HCT116 (cell line): ENCODE measurements at regions of chr17 and their contacts with region 1.

Region 1: DNA sequence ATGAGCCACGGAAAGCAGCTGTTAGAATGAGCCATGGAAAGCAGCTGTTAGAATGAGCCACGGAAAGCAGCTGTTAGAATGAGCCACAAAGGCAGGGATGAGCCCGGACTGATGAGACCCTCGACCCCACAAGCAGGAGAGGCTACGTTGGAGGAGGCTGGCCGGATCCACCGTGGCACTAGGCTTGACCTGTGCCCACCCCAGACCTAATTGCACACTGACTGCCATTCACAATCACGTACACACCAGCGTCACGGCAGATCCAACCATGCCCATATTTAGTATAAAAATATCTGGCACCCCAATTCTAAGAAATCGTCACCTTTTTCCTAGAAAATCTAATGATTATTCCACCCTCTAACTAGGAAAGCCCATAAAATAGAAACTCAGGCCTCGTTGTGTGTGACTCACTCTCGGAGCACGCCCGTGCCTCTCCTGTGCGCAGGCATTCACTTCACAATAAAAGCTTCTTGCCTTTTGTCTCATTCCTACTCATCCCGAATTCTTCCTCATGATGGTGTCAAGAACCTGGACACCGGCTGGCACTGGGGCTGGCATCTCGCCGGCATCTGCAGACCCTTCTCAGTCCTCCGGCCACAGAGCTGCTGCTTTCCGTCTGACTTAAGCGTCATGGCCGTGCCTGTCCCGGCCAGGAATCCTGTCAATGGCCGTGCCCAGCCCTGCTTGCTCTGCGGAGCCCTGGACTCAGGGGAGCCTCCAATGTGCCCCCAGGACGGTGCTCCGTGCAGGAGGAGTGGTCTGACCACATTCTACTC is 5.5 kb upstream of the SECTM1 start:
- DNase-seq: peak; percentile 72
- ATAC-seq: peak; percentile 67
- H3K4me3 ChIP-seq: peak overlapping the region; percentile 49 to 61
- H3K27ac ChIP-seq: peak overlapping the region; percentile 96
- H3K4me1 ChIP-seq: peaks cover 59 to 73% of the 10 kb centered on the region in 2 experiments
- H3K27me3 ChIP-seq: no peaks in the 10 kb centered on the region
- CTCF ChIP-seq: no peak
- POLR2A ChIP-seq: no peak
- RAD21 ChIP-seq: no peak

Region 2: DNA sequence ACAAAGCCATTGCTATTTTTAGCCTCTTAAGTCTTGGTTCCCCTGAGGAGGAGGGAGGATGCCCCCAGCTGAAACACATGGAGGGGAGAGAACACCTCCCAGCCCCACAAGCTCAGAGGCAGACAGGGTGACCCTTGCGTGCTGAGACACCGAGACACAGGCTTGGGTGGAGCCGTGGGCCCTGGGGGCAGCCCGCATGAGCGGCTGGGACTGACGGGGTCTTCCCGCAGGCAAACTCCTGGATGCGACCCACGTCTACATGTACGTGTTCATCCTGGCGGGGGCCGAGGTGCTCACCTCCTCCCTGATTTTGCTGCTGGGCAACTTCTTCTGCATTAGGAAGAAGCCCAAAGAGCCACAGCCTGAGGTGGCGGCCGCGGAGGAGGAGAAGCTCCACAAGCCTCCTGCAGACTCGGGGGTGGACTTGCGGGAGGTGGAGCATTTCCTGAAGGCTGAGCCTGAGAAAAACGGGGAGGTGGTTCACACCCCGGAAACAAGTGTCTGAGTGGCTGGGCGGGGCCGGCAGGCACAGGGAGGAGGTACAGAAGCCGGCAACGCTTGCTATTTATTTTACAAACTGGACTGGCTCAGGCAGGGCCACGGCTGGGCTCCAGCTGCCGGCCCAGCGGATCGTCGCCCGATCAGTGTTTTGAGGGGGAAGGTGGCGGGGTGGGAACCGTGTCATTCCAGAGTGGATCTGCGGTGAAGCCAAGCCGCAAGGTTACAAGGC is 100.4 kb before region 1 on chr17:
- CTCF ChIA-PET with region 1: no interaction called
- POLR2A ChIA-PET with region 1: no interaction called
- RAD21 ChIA-PET with region 1: no interaction called
- intact Hi-C with region 1: no loop called
- DNase-seq: no peak
- ATAC-seq: no peak
- H3K4me3 ChIP-seq: no peak overlapping the region
- H3K27ac ChIP-seq: peak overlapping the region; percentile 37; the same call in 1 of the 2 replicates
- H3K4me1 ChIP-seq: peaks cover 36 to 87% of the 10 kb centered on the region in 2 experiments
- H3K27me3 ChIP-seq: no peaks in the 10 kb centered on the region
- CTCF ChIP-seq: no peak
- POLR2A ChIP-seq: no peak
- RAD21 ChIP-seq: no peak

Region 3: GRCh38 chr17:82592767-82593589 is 253.9 kb after region 1 on chr17:
- CTCF ChIA-PET with region 1: no interaction called
- POLR2A ChIA-PET with region 1: interaction called, 3 read pairs
- RAD21 ChIA-PET with region 1: no interaction called
- intact Hi-C with region 1: loop called (anchors 2 kb)
- DNase-seq: peak; percentile 70
- ATAC-seq: peak; percentile 73
- H3K4me3 ChIP-seq: peak overlapping the region; percentile 59 to 73
- H3K27ac ChIP-seq: peak overlapping the region; percentile 98
- H3K4me1 ChIP-seq: peaks cover 14 to 40% of the 10 kb centered on the region in 2 experiments
- H3K27me3 ChIP-seq: no peaks in the 10 kb centered on the region
- CTCF ChIP-seq: no peak
- POLR2A ChIP-seq: no peak
- RAD21 ChIP-seq: no peak